ENCODE measurements at regions of chr1 and their contacts with region 1.

Region 1: DNA sequence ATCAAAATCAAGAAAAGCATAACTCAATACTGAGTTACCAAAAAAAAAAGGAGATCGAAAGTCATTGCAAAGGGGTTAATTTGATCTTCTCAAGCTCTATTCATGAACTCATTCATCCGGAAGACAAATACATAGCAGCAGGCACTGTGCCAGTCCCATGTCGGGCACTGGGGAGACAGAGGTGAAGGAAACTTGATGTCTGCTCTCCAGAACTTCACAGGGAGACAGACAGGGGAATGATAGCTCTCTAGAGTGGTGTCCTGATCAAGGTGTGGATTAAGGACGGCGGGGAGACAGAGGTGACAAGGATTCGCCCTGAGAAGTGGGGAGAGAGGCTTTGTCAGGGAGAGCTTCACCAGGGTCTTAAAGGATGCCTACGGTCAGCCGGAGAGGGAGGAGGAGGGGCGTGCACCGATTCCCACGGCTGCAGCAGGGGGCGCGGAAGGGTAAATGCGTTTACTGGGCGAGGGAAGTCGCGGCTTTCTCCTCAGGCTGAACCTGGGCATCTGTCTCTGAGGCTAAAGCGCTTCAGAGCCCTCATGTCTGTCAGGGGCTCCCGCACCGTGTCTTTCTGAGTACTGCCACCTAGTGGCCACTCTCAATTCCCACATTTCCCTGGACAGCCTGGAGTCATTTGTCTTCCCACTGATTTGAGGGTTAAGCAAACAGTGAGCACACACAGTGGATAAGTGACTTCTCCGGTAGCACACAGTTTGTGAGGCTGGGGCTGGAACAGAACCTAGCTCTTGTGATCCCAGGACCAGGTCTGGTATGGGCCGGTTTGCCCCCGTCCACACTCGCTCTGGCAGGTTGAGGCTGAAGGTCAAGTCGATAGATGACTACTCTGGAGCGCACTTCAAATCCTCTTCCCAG is 152.8 kb downstream of the TENT5C start:
- DNase-seq: peak; percentile 78
- H3K4me3 ChIP-seq: peak overlapping the region; percentile 46 to 53
- H3K27ac ChIP-seq: no peak overlapping the region; a peak in 1 of 4 replicates
- H3K4me1 ChIP-seq: peaks cover 0 to 12% of the 10 kb centered on the region in 2 experiments; a peak in 1 of 4 replicates
- H3K27me3 ChIP-seq: no peaks in the 10 kb centered on the region
- CTCF ChIP-seq: peak; percentile 86
- EP300 ChIP-seq: no peak
- RAD21 ChIP-seq: peak; percentile 83

Region 2: GRCh38 chr1:117534995-117535467 is 223.6 kb before region 1 on chr1:
- CTCF ChIA-PET with region 1: interaction called, 192 read pairs
- POLR2A ChIA-PET with region 1: no interaction called
- DNase-seq: peak; percentile 56
- H3K4me3 ChIP-seq: no peak overlapping the region; a peak in 1 of 4 replicates
- H3K27ac ChIP-seq: no peak overlapping the region
- H3K4me1 ChIP-seq: no peaks in the 10 kb centered on the region
- H3K27me3 ChIP-seq: no peaks in the 10 kb centered on the region
- CTCF ChIP-seq: peak; percentile 68
- EP300 ChIP-seq: no peak
- RAD21 ChIP-seq: peak; percentile 69

Region 3: GRCh38 chr1:117631359-117632160 is 127.1 kb before region 1 on chr1:
- CTCF ChIA-PET with region 1: interaction called, 12 read pairs
- POLR2A ChIA-PET with region 1: no interaction called
- DNase-seq: no peak
- H3K4me3 ChIP-seq: no peak overlapping the region
- H3K27ac ChIP-seq: no peak overlapping the region
- H3K4me1 ChIP-seq: no peaks in the 10 kb centered on the region; a peak in 1 of 4 replicates
- H3K27me3 ChIP-seq: no peaks in the 10 kb centered on the region
- CTCF ChIP-seq: no peak
- EP300 ChIP-seq: no peak
- RAD21 ChIP-seq: no peak

Region 4: GRCh38 chr1:117732065-117732797 is 26.4 kb before region 1 on chr1:
- CTCF ChIA-PET with region 1: interaction called, 11 read pairs
- POLR2A ChIA-PET with region 1: no interaction called
- DNase-seq: no peak
- H3K4me3 ChIP-seq: no peak overlapping the region
- H3K27ac ChIP-seq: no peak overlapping the region
- H3K4me1 ChIP-seq: no peaks in the 10 kb centered on the region
- H3K27me3 ChIP-seq: no peaks in the 10 kb centered on the region
- CTCF ChIP-seq: no peak
- EP300 ChIP-seq: no peak
- RAD21 ChIP-seq: no peak

Region 5: GRCh38 chr1:117780687-117781475 is 22.2 kb after region 1 on chr1:
- CTCF ChIA-PET with region 1: interaction called, 23 read pairs
- POLR2A ChIA-PET with region 1: no interaction called
- DNase-seq: peak; percentile 44
- H3K4me3 ChIP-seq: no peak overlapping the region
- H3K27ac ChIP-seq: peak overlapping the region in 1 of 2 experiments; percentile 48; a peak in 2 of 4 replicates
- H3K4me1 ChIP-seq: peaks cover 0 to 13% of the 10 kb centered on the region in 2 experiments; a peak in 2 of 4 replicates
- H3K27me3 ChIP-seq: no peaks in the 10 kb centered on the region
- CTCF ChIP-seq: no peak
- EP300 ChIP-seq: peak in 1 of 2 experiments; percentile 49; a peak in 1 of 4 replicates
- RAD21 ChIP-seq: no peak

Measured in SK-N-SH (cell line).